A673 (cell line): ENCODE measurements at regions of chrX and their contacts with region 1.

Region 1: GRCh38 chrX:109585488-109585887 is 39.5 kb downstream of the KCNE5 start:
- DNase-seq: no peak
- H3K4me3 ChIP-seq: no peak overlapping the region
- H3K27ac ChIP-seq: no peak overlapping the region
- H3K4me1 ChIP-seq: no peaks in the 10 kb centered on the region
- H3K27me3 ChIP-seq: peaks cover 12% of the 10 kb centered on the region
- CTCF ChIP-seq: no peak

Region 2: GRCh38 chrX:109519001-109519400 is 66.5 kb before region 1 on chrX:
- CTCF ChIA-PET with region 1: no interaction called
- POLR2A ChIA-PET with region 1: no interaction called
- intact Hi-C with region 1: no loop called
- DNase-seq: no peak
- H3K4me3 ChIP-seq: no peak overlapping the region
- H3K27ac ChIP-seq: no peak overlapping the region
- H3K4me1 ChIP-seq: no peaks in the 10 kb centered on the region
- H3K27me3 ChIP-seq: peaks cover 4% of the 10 kb centered on the region
- CTCF ChIP-seq: no peak

Region 3: DNA sequence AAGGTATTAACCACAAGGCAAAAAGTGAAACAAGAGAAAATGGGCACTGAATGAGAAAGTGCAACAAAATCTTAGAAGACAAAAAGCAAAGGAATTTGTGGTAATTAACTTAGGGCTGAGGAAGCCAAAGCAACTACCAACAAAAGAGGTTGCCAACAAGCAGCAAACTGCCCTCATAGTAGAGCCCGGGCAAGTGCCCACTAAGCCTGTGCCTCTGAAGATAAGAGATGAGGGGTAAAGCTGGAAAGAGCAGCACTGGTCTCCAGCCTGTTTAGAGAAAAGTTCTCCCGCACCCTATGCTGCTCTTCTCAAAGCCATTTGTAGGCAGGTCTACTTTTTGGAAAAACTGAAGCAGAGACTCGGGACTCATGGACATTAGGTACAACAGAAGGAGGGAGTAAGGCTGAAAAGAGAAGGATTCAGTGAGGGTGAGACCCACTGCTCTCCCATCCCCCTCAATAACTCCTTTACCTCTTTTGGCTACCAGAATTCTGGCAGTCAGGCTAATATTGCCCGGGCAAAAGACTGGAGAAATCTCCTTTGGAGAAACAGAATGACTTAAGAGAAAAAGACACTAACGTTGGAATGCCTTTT is 69.1 kb after region 1 on chrX:
- CTCF ChIA-PET with region 1: no interaction called
- POLR2A ChIA-PET with region 1: no interaction called
- intact Hi-C with region 1: no loop called
- DNase-seq: no peak
- H3K4me3 ChIP-seq: no peak overlapping the region
- H3K27ac ChIP-seq: no peak overlapping the region
- H3K4me1 ChIP-seq: no peaks in the 10 kb centered on the region
- H3K27me3 ChIP-seq: no peaks in the 10 kb centered on the region
- CTCF ChIP-seq: no peak

Region 4: GRCh38 chrX:111123125-111123524 is 1537.6 kb after region 1 on chrX:
- CTCF ChIA-PET with region 1: no interaction called
- POLR2A ChIA-PET with region 1: interaction called, 10 read pairs
- intact Hi-C with region 1: no loop called
- DNase-seq: no peak
- H3K4me3 ChIP-seq: no peak overlapping the region
- H3K27ac ChIP-seq: no peak overlapping the region
- H3K4me1 ChIP-seq: no peaks in the 10 kb centered on the region
- H3K27me3 ChIP-seq: peaks cover 25% of the 10 kb centered on the region
- CTCF ChIP-seq: no peak

Region 5: GRCh38 chrX:111322231-111322855 is 1736.9 kb after region 1 on chrX:
- CTCF ChIA-PET with region 1: no interaction called
- POLR2A ChIA-PET with region 1: no interaction called
- intact Hi-C with region 1: no loop called
- DNase-seq: no peak
- H3K4me3 ChIP-seq: no peak overlapping the region
- H3K27ac ChIP-seq: no peak overlapping the region
- H3K4me1 ChIP-seq: no peaks in the 10 kb centered on the region
- H3K27me3 ChIP-seq: peaks cover 8% of the 10 kb centered on the region
- CTCF ChIP-seq: no peak